A549 (cell line): ENCODE measurements at regions of chr11 and their contacts with region 1.

Region 1: GRCh38 chr11:78798660-78799059 is 224.0 kb upstream of the NARS2 start:
- DNase-seq: peak; percentile 20 to 52
- ATAC-seq: peak; percentile 78 to 97
- H3K4me3 ChIP-seq: no peak overlapping the region
- H3K27ac ChIP-seq: no peak overlapping the region
- H3K4me1 ChIP-seq: peaks cover 17% of the 10 kb centered on the region; the same call in 2 of the 3 replicates
- CTCF ChIP-seq: peak; percentile 55
- EP300 ChIP-seq: no peak
- POLR2A ChIP-seq: no peak
- RAD21 ChIP-seq: peak; percentile 51 to 59

Region 2: GRCh38 chr11:78784321-78785061 is 14.2 kb before region 1 on chr11:
- CTCF ChIA-PET with region 1: interaction called, 13 read pairs
- POLR2A ChIA-PET with region 1: no interaction called
- DNase-seq: no peak
- ATAC-seq: no peak
- H3K4me3 ChIP-seq: no peak overlapping the region
- H3K27ac ChIP-seq: no peak overlapping the region
- H3K4me1 ChIP-seq: no peaks in the 10 kb centered on the region; the same call in 2 of the 3 replicates
- CTCF ChIP-seq: no peak
- EP300 ChIP-seq: no peak
- POLR2A ChIP-seq: no peak
- RAD21 ChIP-seq: no peak

Region 3: DNA sequence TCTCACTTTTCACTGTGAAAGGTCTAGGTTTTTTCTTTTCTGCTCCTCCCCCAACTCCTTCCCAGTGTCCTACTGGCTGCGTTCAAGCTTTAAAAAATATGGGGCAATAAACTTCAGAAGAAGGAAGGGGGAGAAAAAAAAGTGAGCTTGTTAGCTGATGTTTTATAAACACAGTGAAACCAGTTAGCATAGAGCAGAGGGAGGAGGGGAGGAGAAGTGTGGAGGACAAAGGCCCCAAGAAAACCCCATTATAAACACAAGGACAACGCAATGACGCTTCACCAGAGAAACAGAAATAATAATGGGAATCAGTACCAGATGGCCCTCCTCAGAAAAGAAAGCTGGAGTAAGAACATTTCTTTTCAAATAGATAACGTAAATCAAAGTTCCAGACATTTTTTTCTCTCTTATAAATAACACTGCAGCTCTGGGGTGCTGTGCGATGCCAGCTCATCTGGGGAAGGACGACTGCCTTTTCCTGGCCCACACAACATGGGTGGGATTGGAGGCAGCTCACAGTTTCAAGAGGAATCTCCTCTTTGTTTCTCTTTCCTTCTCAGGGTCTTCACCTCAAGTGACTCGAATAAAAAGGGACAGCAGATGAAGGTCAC is 11.4 kb after region 1 on chr11:
- CTCF ChIA-PET with region 1: interaction called, 14 read pairs
- POLR2A ChIA-PET with region 1: no interaction called
- DNase-seq: no peak
- ATAC-seq: no peak
- H3K4me3 ChIP-seq: no peak overlapping the region
- H3K27ac ChIP-seq: no peak overlapping the region
- H3K4me1 ChIP-seq: no peaks in the 10 kb centered on the region
- CTCF ChIP-seq: no peak
- EP300 ChIP-seq: no peak
- POLR2A ChIP-seq: no peak
- RAD21 ChIP-seq: no peak